ENCODE measurements at regions of chr10 and their contacts with region 1.

Region 1: DNA sequence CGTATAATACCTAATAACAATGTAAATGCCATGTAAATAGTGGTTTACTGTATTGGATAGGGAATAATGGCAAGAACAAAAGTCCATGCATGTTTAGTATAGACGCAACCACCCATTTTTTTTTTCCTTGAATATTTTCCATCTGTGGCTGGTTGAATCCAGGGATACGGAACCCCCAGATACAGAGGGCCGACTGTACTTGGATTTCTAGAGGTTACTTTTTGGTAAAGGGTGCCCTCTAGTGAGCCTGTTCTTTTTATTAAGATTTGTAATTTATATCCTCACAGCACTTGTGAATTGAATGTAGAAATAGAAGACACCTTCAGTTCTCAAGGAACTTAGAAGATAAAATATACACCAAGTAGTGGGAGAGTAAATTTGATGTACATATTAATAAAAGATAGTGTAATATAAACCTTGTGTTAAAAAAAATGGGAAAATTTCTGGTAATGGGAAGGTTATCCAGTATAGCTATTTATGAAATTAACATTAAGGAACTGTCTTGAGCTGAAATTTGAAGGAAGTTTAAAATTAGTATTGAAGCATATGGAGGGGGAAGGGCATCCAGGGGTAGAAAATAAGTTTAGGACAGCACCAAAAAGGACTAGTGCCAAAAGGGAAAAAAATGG is 32.0 kb downstream of the EXOC6 start:
- DNase-seq: no peak
- ATAC-seq: peak in 1 of 2 donors; percentile 38

Region 2: GRCh38 chr10:92517034-92517655 is 363.2 kb before region 1 on chr10:
- intact Hi-C with region 1: loop called (anchors 5 to 10 kb)
- DNase-seq: peak; percentile 59
- ATAC-seq: peak; percentile 59 to 86

Region 3: GRCh38 chr10:92592761-92593618 is 287.4 kb before region 1 on chr10 and contains the start of gene KIF11:
- intact Hi-C with region 1: loop called in 1 of 2 experiments (anchors 5 kb)
- DNase-seq: peak; percentile 99
- ATAC-seq: peak; percentile 96 to 97
- total RNA-seq, gene KIF11: 0.39 to 1.6 TPM

Region 4: GRCh38 chr10:92848441-92849233 is 31.7 kb before region 1 on chr10 and contains the start of gene EXOC6:
- intact Hi-C with region 1: loop called in 1 of 2 experiments (anchors 5 kb)
- DNase-seq: peak; percentile 88
- ATAC-seq: peak; percentile 93 to 95
- total RNA-seq, gene EXOC6: 9.7 to 13.4 TPM